PC-3 (cell line): ENCODE measurements at regions of chr11 and their contacts with region 1.

Region 1: GRCh38 chr11:20355221-20356219 is 8.0 kb upstream of the HTATIP2 start:
- DNase-seq: peak; percentile 68
- ATAC-seq: peak; percentile 90
- H3K4me3 ChIP-seq: no peak overlapping the region
- H3K27ac ChIP-seq: no peak overlapping the region
- H3K4me1 ChIP-seq: peaks cover 15% of the 10 kb centered on the region
- H3K27me3 ChIP-seq: peaks cover under 1% of the 10 kb centered on the region; the same call in 1 of the 2 replicates
- CTCF ChIP-seq: peak; percentile 69

Region 2: GRCh38 chr11:20194470-20194869 is 161.1 kb before region 1 on chr11:
- CTCF ChIA-PET with region 1: interaction called, 3 read pairs
- POLR2A ChIA-PET with region 1: interaction called, 12 read pairs
- intact Hi-C with region 1: no loop called
- DNase-seq: no peak
- ATAC-seq: no peak
- H3K4me3 ChIP-seq: no peak overlapping the region
- H3K27ac ChIP-seq: no peak overlapping the region
- H3K4me1 ChIP-seq: no peaks in the 10 kb centered on the region
- H3K27me3 ChIP-seq: peaks cover 62% of the 10 kb centered on the region
- CTCF ChIP-seq: no peak

Region 3: DNA sequence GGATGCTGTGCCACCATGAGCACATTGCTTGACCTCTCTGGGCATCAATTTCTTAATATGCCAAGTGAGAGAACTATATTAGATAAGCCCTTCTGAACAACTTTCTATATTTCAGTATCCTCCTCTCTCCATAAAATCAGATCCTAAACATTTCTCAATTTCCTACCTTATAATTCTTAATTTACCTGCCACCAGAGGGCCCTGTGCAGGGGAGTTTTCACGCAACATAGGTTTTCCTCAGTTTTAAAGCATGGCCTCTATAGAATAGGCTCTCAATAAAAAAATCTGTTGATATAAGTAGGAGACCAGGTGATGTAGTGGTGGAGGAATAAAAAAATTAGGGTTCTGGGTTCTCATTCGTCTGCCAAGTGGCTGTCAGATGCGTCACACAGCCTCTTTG is 111.5 kb before region 1 on chr11:
- CTCF ChIA-PET with region 1: no interaction called
- POLR2A ChIA-PET with region 1: no interaction called
- intact Hi-C with region 1: loop called (anchors 1 kb)
- DNase-seq: peak; percentile 39
- ATAC-seq: peak; percentile 51
- H3K4me3 ChIP-seq: no peak overlapping the region
- H3K27ac ChIP-seq: no peak overlapping the region
- H3K4me1 ChIP-seq: no peaks in the 10 kb centered on the region
- H3K27me3 ChIP-seq: peaks cover 42% of the 10 kb centered on the region
- CTCF ChIP-seq: peak; percentile 66

Region 4: GRCh38 chr11:20303343-20303965 is 52.1 kb before region 1 on chr11:
- CTCF ChIA-PET with region 1: no interaction called
- POLR2A ChIA-PET with region 1: no interaction called
- intact Hi-C with region 1: no loop called
- DNase-seq: no peak
- ATAC-seq: no peak
- H3K4me3 ChIP-seq: no peak overlapping the region
- H3K27ac ChIP-seq: no peak overlapping the region
- H3K4me1 ChIP-seq: no peaks in the 10 kb centered on the region
- H3K27me3 ChIP-seq: peaks cover 71% of the 10 kb centered on the region
- CTCF ChIP-seq: no peak